CD8-positive, alpha-beta T cell (primary cell): ENCODE measurements at regions of chr14 and their contacts with region 1.

Region 1: DNA sequence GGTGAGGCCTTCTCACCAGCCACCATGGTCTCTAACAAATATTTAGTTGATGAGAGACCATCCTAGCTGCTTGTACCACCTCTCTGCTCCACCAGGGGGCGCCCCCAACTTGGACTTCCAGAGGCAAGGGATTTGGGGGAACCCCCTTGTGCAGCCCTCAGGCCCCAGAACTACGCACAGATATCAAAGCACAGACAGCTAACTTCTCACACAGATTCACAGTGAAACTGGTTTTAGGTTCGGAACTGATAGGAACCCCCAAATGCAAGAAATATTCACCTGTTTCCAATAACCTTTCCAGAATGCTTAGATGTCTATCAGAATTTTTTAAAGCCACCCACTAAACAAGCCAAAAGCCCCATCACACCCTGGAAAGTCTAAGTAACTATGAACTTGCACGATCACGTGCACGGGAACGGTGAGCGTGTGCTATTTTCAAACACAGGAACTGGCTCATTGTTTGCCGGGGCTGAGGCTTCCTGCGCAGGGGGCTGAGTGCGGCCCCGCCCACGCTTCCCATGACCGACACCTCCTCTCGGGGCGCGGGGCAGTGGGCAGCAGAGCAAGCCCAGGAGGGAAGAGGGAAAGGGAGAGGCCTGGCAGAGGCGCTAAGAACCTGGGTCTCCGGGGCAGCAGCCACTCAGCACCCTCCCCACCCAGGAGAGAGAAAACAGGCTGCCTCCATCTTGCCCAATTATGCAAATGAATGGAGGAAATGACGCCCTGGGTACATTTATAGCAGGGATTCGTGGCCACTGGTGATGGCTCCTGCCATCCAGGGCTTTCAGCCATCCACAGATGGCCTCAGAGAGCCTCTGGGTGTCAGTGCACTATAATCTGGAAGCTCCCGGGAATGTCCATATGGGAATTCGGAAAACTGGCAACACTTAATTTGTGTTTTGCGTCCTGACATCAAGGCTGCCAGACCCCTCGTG is 79.4 kb upstream of the GPR68 start:
- DNase-seq: peak; percentile 89 to 98 (median 94)
- ATAC-seq: peak; percentile 77
- H3K4me3 ChIP-seq: peak overlapping the region; percentile 18 to 33
- H3K4me3 Mint-ChIP-seq: peak overlapping the region; percentile 81
- H3K27ac ChIP-seq: peak overlapping the region; percentile 65 to 95
- H3K27ac Mint-ChIP-seq: peak overlapping the region; percentile 99
- H3K4me1 ChIP-seq: peaks cover 95% of the 10 kb centered on the region
- H3K4me1 Mint-ChIP-seq: peaks cover 84% of the 10 kb centered on the region
- H3K27me3 ChIP-seq: no peaks in the 10 kb centered on the region
- H3K27me3 Mint-ChIP-seq: no peaks in the 10 kb centered on the region
- CTCF ChIP-seq: peak; percentile 89

Region 2: DNA sequence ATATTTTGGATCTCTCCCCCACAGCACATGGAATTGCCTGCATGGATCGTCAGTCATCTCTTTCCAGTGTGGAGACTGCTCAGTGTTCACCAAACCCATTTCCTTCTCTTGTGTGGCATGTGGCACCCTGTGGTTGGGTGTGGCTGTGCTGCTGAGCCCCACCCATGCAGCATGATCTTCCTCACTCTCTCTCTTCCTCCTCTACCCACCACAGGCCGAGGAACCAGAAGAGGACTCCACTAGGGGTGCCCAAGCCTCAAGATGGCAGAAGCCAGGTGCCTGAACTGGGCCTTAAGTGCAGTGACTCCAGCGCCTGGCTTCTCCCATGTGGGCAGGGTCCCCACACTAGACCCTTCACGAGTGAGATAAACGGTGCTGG is 12.7 kb before region 1 on chr14:
- CTCF ChIA-PET with region 1: interaction called, 13 read pairs
- POLR2A ChIA-PET with region 1: interaction called, 11 read pairs
- intact Hi-C with region 1: loop called in 1 of 2 experiments (anchors 1 kb)
- DNase-seq: peak; percentile 27 to 87 (median 64)
- ATAC-seq: peak; percentile 30
- H3K4me3 ChIP-seq: no peak overlapping the region
- H3K4me3 Mint-ChIP-seq: peak overlapping the region; percentile 64
- H3K27ac ChIP-seq: peak overlapping the region; percentile 66 to 75
- H3K27ac Mint-ChIP-seq: peak overlapping the region; percentile 95
- H3K4me1 ChIP-seq: peaks cover 41% of the 10 kb centered on the region
- H3K4me1 Mint-ChIP-seq: peaks cover 52% of the 10 kb centered on the region
- H3K27me3 ChIP-seq: no peaks in the 10 kb centered on the region
- H3K27me3 Mint-ChIP-seq: no peaks in the 10 kb centered on the region
- CTCF ChIP-seq: no peak

Region 3: GRCh38 chr14:91350813-91351511 is 27.0 kb after region 1 on chr14:
- CTCF ChIA-PET with region 1: interaction called, 161 read pairs
- POLR2A ChIA-PET with region 1: interaction called, 21 read pairs
- intact Hi-C with region 1: loop called (anchors 1 to 2 kb)
- DNase-seq: peak in 6 of 9 experiments; percentile 52 to 91 (median 72)
- ATAC-seq: peak; percentile 60
- H3K4me3 ChIP-seq: peak overlapping the region; percentile 27 to 39
- H3K4me3 Mint-ChIP-seq: peak overlapping the region; percentile 86
- H3K27ac ChIP-seq: peak overlapping the region; percentile 45 to 83
- H3K27ac Mint-ChIP-seq: peak overlapping the region; percentile 94
- H3K4me1 ChIP-seq: peaks cover 89% of the 10 kb centered on the region
- H3K4me1 Mint-ChIP-seq: peaks cover 90% of the 10 kb centered on the region
- H3K27me3 ChIP-seq: no peaks in the 10 kb centered on the region
- H3K27me3 Mint-ChIP-seq: no peaks in the 10 kb centered on the region
- CTCF ChIP-seq: no peak

Region 4: GRCh38 chr14:91396959-91397815 is 73.2 kb after region 1 on chr14:
- CTCF ChIA-PET with region 1: interaction called, 59 read pairs
- POLR2A ChIA-PET with region 1: interaction called, 13 read pairs
- intact Hi-C with region 1: no loop called
- DNase-seq: peak in 7 of 9 experiments; percentile 58 to 81 (median 69)
- ATAC-seq: peak; percentile 55
- H3K4me3 ChIP-seq: peak overlapping the region; percentile 29 to 41
- H3K4me3 Mint-ChIP-seq: peak overlapping the region; percentile 81
- H3K27ac ChIP-seq: peak overlapping the region; percentile 42 to 78
- H3K27ac Mint-ChIP-seq: peak overlapping the region; percentile 90
- H3K4me1 ChIP-seq: peaks cover 92% of the 10 kb centered on the region
- H3K4me1 Mint-ChIP-seq: peaks cover 89% of the 10 kb centered on the region
- H3K27me3 ChIP-seq: no peaks in the 10 kb centered on the region
- H3K27me3 Mint-ChIP-seq: no peaks in the 10 kb centered on the region
- CTCF ChIP-seq: no peak

Region 5: DNA sequence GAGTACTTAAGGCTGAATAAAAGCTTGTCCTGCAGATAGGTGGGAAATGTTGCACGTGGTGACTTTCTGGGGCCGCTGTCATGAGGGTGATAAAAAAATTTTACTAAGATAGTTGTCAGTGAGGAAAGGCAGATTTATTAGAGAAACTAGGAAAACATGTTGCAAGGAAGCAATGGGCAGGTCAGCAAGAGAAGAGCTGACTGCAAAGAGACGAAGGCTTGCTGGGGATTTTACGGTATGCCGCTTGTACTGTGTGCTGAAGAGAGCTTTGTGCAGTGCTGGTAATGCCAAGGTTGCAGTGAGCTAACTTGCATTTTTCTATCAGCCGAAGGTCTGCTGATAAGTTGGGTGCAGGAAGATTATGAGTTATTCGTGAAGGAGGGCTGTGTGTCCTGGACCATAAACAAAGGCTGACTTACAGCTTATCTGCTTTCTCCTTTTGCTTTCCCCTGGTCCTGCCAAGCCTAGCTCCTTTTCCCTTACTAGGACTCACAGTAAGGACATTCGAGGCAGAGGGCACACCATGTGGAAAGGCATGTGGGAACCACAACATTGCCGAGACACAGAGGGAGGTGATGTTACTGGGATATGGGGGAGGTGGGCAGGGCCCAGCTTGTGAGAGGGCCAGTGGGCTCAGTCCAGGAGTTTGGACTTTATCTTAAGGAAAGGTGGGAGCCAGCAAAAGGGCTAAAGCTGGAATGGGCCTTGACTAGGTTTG is 101.0 kb after region 1 on chr14:
- CTCF ChIA-PET with region 1: interaction called, 31 read pairs
- POLR2A ChIA-PET with region 1: interaction called, 3 read pairs
- intact Hi-C with region 1: loop called in 1 of 2 experiments (anchors 1 kb)
- DNase-seq: no peak
- ATAC-seq: no peak
- H3K4me3 ChIP-seq: no peak overlapping the region
- H3K4me3 Mint-ChIP-seq: no peak overlapping the region
- H3K27ac ChIP-seq: no peak overlapping the region
- H3K27ac Mint-ChIP-seq: no peak overlapping the region
- H3K4me1 ChIP-seq: peaks cover 9% of the 10 kb centered on the region
- H3K4me1 Mint-ChIP-seq: peaks cover 19% of the 10 kb centered on the region
- H3K27me3 ChIP-seq: no peaks in the 10 kb centered on the region
- H3K27me3 Mint-ChIP-seq: no peaks in the 10 kb centered on the region
- CTCF ChIP-seq: no peak

Region 6: GRCh38 chr14:91624757-91625156 is 300.8 kb after region 1 on chr14:
- CTCF ChIA-PET with region 1: no interaction called
- POLR2A ChIA-PET with region 1: no interaction called
- intact Hi-C with region 1: no loop called
- DNase-seq: no peak
- ATAC-seq: no peak
- H3K4me3 ChIP-seq: no peak overlapping the region
- H3K4me3 Mint-ChIP-seq: no peak overlapping the region
- H3K27ac ChIP-seq: no peak overlapping the region
- H3K27ac Mint-ChIP-seq: no peak overlapping the region
- H3K4me1 ChIP-seq: no peaks in the 10 kb centered on the region
- H3K4me1 Mint-ChIP-seq: no peaks in the 10 kb centered on the region
- H3K27me3 ChIP-seq: no peaks in the 10 kb centered on the region
- H3K27me3 Mint-ChIP-seq: peaks cover 6% of the 10 kb centered on the region
- CTCF ChIP-seq: no peak

Region 7: GRCh38 chr14:92121670-92122350 is 797.9 kb after region 1 on chr14 and contains the starts of genes CPSF2 and NDUFB1:
- CTCF ChIA-PET with region 1: no interaction called
- POLR2A ChIA-PET with region 1: no interaction called
- intact Hi-C with region 1: loop called in 1 of 2 experiments (anchors 10 kb)
- DNase-seq: peak; percentile 70 to 90 (median 83)
- ATAC-seq: peak; percentile 85
- H3K4me3 ChIP-seq: peak within 1 kb of the TSS; percentile 81 to 86
- H3K4me3 Mint-ChIP-seq: peak within 1 kb of the TSS; percentile 99
- H3K27ac ChIP-seq: peak within 1 kb of the TSS; percentile 88 to 89
- H3K27ac Mint-ChIP-seq: peak within 1 kb of the TSS; percentile 99
- H3K4me1 ChIP-seq: peaks cover 31% of the 10 kb centered on the region
- H3K4me1 Mint-ChIP-seq: peaks cover 55% of the 10 kb centered on the region
- H3K27me3 ChIP-seq: no peaks in the 10 kb centered on the region
- H3K27me3 Mint-ChIP-seq: no peaks in the 10 kb centered on the region
- CTCF ChIP-seq: no peak
- total RNA-seq, gene CPSF2: 12.1 to 14.2 TPM
- total RNA-seq, gene NDUFB1: 38.5 to 43.9 TPM